ENCODE measurements at regions of chr11 and their contacts with region 1.

Region 1: DNA sequence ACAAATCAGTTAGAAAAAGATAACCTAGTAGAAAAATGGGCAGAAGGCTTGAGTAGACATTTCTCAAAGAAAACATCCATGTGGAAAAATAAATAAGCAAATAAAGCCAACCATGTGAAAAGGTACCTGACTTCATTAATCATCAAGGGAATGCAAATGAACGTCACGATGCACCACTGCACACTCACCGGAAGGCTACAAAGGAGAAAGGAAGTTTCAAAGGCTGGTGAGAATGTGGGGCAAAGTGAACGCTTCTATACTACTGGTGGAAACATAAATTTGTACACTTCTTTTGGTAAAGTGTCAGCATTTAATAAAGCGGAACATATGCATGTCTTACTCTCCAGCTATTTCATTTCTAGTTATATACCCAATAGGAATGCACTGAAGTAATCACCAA is 166.8 kb downstream of the CSNK2A3 start:
- DNase-seq: no peak

Region 2: DNA sequence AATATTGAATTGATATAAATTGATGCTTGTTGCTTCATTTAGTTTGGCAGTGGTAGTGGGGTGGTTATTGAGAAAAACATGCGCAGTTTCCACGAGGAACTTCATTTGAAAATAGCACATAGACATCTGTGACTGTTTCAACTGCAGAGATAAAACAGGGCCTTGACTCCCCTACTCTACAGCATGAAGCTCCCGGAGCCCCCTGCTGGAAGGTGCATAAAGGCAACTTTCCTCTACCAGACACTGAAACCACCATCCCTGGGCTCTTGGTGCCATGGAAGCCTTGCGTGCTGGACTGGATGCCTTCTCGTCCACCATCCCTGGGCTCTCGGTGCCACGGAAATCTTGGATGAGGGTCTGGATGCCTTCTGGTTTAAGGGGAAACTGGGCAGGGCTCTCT is 29.1 kb before region 1 on chr11:
- intact Hi-C with region 1: loop called (anchors 1 kb)
- DNase-seq: peak in 1 of 10 donors; percentile 70

Region 3: GRCh38 chr11:11279956-11280689 is 93.9 kb after region 1 on chr11:
- intact Hi-C with region 1: no loop called
- DNase-seq: no peak

Region 4: GRCh38 chr11:11329062-11329806 is 143.0 kb after region 1 on chr11:
- intact Hi-C with region 1: no loop called
- DNase-seq: no peak

Region 5: DNA sequence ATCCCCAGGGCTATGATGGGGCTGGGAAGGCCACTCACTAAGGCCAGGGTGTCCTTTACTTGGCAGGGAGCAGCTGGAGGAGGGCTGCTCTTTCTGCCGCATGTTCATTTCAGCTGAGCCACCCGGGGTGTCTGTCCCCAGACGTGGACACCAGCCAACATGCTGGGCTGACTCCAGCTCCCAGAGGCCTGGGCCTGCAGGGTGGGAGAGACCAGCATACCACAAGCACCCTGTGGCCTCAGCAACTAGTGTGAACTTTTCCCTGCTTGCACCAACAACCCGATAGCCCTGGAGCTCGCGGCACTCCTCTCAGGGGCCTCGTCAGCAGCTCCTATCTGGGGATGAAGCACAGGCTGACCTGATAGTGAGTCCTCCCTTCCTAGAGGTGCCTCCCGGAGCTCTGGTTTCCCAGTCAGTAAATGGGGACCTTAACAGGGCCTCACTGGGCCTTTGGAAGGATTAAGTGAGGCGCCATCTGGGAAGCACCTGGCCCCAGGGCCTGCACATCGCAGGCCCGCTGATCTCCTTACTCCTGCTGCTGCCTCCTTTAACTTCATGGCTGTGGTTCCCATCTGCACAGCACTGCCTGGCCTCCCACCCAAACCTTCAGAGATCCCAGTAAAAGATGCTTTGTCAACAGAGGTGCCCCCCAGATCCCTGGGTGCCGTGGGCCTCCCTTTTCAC is 352.2 kb after region 1 on chr11:
- intact Hi-C with region 1: no loop called
- DNase-seq: peak in 5 of 10 donors; percentile 24 to 90 (median 77)

Region 6: DNA sequence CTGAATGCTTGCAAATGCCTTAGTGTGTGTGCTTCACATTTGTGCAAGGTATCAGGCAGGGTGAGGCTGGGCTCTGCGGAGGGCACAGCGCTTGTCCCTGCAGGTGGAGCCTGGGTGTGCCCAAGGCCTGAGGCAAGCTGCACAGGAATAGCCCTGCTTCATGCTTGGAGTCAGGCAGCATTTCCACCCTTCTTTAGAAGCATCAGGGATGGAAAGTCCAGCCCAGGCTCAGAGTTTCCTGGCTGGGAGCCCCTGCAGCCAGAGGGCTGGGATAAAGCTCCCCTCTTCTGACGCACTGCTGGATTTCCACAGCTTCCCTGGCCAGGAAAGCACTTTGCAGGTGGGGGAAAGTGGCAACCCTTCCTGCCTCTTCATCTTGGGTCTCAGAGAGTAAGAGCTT is 372.1 kb after region 1 on chr11:
- intact Hi-C with region 1: no loop called
- DNase-seq: no peak